HepG2 (cell line): ENCODE measurements at regions of chr16 and their contacts with region 1.

Region 1: GRCh38 chr16:8797364-8798173 is at the starts of genes PMM2 and TMEM186:
- DNase-seq: peak; percentile 99
- ATAC-seq: peak; percentile 98
- H3K4me3 ChIP-seq: peak within 1 kb of the TSS; percentile 85 to 87 (median 86)
- H3K27ac ChIP-seq: peak within 1 kb of the TSS; percentile 70
- H3K4me1 ChIP-seq: peaks cover 45% of the 10 kb centered on the region
- H3K27me3 ChIP-seq: no peaks in the 10 kb centered on the region; a peak in 1 of 5 replicates
- CTCF ChIP-seq: no peak; the same call in none of the 2 replicates
- EP300 ChIP-seq: peak; percentile 59 to 63; a peak in 2 of 4 replicates
- POLR2A ChIP-seq: peak; percentile 93 to 97
- RAD21 ChIP-seq: peak; percentile 80
- total RNA-seq, gene PMM2: 93.7 and 100 TPM in 2 replicates
- total RNA-seq, gene TMEM186: 19.2 and 19.3 TPM in 2 replicates

Region 2: DNA sequence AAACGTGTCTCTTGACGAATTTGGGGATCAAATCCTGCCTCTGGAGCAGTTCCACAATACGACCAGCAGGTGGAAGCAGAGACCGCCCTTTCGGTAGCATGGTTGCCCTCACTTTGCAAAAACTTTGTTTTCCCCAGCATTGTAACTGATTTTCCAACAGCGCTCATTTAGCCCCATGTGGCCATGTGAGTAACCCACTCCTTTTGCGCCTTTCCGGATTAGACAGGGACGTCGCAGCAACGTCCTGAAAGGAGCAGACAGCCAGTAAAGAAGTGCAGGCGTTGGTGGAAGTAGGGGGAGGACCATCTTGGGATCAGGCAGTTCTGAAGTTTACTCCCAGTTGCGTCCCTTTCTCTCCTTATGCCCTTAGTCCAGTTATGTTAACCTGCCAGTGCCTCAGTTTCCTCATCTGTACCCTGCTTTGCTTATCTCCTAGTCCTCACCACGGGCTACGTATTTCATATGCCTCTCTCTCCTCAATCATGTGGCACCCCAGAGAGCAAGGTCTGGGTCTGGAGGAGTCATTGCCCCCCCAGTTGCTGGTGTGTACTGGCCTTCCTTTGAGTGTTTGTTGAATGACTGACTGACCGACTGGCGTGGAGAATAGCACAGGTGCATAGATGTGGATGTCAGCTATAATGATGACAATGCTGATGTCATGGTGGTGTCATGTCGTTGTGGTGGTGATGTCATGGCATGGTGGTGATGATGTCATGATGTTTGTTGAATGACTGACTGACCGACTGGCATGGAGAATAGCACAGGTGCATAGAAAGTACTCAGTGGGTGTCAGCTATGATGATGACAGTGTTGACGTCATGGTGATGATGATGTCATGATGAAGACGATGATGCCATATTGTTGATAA is 229.6 kb before region 1 on chr16:
- CTCF ChIA-PET with region 1: interaction called, 16 read pairs
- POLR2A ChIA-PET with region 1: no interaction called
- in situ Hi-C with region 1: loop called (anchors 5 kb)
- intact Hi-C with region 1: loop called (anchors 1 kb)
- DNase-seq: peak; percentile 97
- ATAC-seq: peak; percentile 68
- H3K4me3 ChIP-seq: no peak overlapping the region
- H3K27ac ChIP-seq: no peak overlapping the region
- H3K4me1 ChIP-seq: peaks cover 53% of the 10 kb centered on the region
- H3K27me3 ChIP-seq: 0 out of 5 replicates have a peak, but pooled peaks cover 0 to 3% of the 10 kb centered on the region in 2 experiments
- CTCF ChIP-seq: peak; percentile 100
- EP300 ChIP-seq: 0 out of 4 replicates have a peak, but pooled peaks of 1 of the 2 experiments have one; percentile 25
- POLR2A ChIP-seq: no peak
- RAD21 ChIP-seq: peak; percentile 100

Region 3: DNA sequence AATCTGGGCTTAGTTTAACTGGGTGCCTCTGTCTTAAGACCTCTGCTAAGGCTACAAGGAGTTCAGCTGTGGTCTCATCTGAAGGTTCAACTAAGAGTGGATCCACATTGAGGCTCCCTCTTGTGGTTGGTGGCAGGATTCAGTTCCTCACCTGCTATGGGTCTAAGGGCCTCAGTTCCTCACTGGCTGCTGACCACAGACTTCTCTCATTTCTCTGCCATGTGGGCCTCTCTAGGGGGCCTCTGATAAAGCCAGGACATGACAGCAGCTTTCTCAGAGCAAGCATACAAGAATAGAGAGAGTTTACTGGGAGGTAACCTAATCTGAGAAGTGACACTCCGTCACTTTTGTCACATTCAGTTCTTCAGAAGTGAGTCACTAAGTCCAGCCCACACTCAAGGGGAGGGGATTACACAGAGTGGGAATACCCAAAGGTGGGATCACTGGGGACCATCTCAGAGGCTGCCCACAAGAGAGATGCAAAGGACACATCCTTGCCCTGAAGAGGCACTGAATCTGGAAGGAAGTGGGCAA is 142.3 kb before region 1 on chr16:
- CTCF ChIA-PET with region 1: interaction called, 99 read pairs
- POLR2A ChIA-PET with region 1: interaction called, 3 read pairs
- in situ Hi-C with region 1: loop called (anchors 5 kb)
- intact Hi-C with region 1: no loop called
- DNase-seq: peak; percentile 73
- ATAC-seq: peak; percentile 85
- H3K4me3 ChIP-seq: no peak overlapping the region
- H3K27ac ChIP-seq: no peak overlapping the region
- H3K4me1 ChIP-seq: peaks cover 5% of the 10 kb centered on the region
- H3K27me3 ChIP-seq: peaks cover 0 to 2% of the 10 kb centered on the region in 2 experiments; a peak in 2 of 5 replicates
- CTCF ChIP-seq: peak; percentile 92
- EP300 ChIP-seq: no peak
- POLR2A ChIP-seq: no peak
- RAD21 ChIP-seq: peak; percentile 76

Region 4: GRCh38 chr16:8660841-8661301 is 136.7 kb before region 1 on chr16:
- CTCF ChIA-PET with region 1: interaction called, 99 read pairs
- POLR2A ChIA-PET with region 1: interaction called, 3 read pairs
- in situ Hi-C with region 1: loop called (anchors 5 kb)
- intact Hi-C with region 1: loop called (anchors 1 kb)
- DNase-seq: peak; percentile 71
- ATAC-seq: peak; percentile 88
- H3K4me3 ChIP-seq: peak overlapping the region in 1 of 3 experiments; percentile 17; a peak in 1 of 6 replicates
- H3K27ac ChIP-seq: no peak overlapping the region
- H3K4me1 ChIP-seq: no peaks in the 10 kb centered on the region
- H3K27me3 ChIP-seq: peaks cover 0 to 2% of the 10 kb centered on the region in 2 experiments; a peak in 2 of 5 replicates
- CTCF ChIP-seq: peak; percentile 99
- EP300 ChIP-seq: no peak
- POLR2A ChIP-seq: no peak
- RAD21 ChIP-seq: peak; percentile 99

Region 5: DNA sequence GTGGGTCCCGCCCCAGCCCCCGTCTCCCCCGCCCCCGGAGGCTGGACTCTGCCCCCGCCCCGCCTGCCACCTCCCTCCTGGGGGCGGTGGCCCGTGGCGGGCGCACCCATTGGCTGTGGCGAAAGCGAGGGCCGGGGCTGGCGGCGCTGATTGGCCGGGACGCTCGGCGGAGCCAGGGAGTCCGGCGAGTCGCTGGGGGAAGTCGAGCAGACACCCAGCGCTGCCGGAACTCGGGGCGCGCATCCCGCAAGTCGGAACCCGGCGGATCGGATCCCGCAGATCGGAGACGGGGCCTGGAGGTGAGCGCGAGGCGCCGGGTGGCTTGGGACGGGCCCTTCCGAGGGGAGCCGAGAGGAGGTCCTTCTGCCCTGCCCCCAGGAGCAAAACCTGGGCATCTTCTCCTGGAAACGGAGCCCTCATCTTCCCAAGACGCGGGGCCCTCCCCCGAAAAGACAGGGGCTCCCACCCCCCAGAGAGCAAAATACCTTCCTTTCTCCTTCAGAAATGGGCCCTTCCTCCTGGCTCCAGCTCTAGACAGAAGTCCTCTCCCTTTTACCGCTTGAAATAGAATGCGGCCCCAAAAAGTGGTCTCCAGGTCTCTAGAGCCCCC is 123.1 kb before region 1 on chr16 and contains the start of gene ABAT:
- CTCF ChIA-PET with region 1: no interaction called
- POLR2A ChIA-PET with region 1: no interaction called
- in situ Hi-C with region 1: no loop called
- intact Hi-C with region 1: loop called (anchors 2 kb)
- DNase-seq: peak; percentile 91
- ATAC-seq: peak; percentile 93
- H3K4me3 ChIP-seq: peak within 1 kb of the TSS; percentile 81 to 94 (median 89)
- H3K27ac ChIP-seq: peak within 1 kb of the TSS; percentile 39
- H3K4me1 ChIP-seq: peaks cover 59% of the 10 kb centered on the region
- H3K27me3 ChIP-seq: no peaks in the 10 kb centered on the region; a peak in 1 of 5 replicates
- CTCF ChIP-seq: 0 out of 2 replicates have a peak, but pooled peaks have one; percentile 9
- EP300 ChIP-seq: peak; percentile 60 to 64; a peak in 2 of 4 replicates
- POLR2A ChIP-seq: peak; percentile 86 to 88
- RAD21 ChIP-seq: peak; percentile 58; the same call in 1 of the 2 replicates
- total RNA-seq, gene ABAT: 97.3 and 123 TPM in 2 replicates

Region 6: GRCh38 chr16:8740775-8741355 is 56.7 kb before region 1 on chr16:
- CTCF ChIA-PET with region 1: no interaction called
- POLR2A ChIA-PET with region 1: interaction called, 4 read pairs
- in situ Hi-C with region 1: no loop called
- intact Hi-C with region 1: loop called (anchors 2 kb)
- DNase-seq: peak; percentile 100
- ATAC-seq: peak; percentile 99
- H3K4me3 ChIP-seq: peak overlapping the region in 1 of 3 experiments; percentile 0; a peak in 1 of 6 replicates
- H3K27ac ChIP-seq: peak overlapping the region; percentile 48
- H3K4me1 ChIP-seq: peaks cover 34% of the 10 kb centered on the region
- H3K27me3 ChIP-seq: no peaks in the 10 kb centered on the region
- CTCF ChIP-seq: no peak
- EP300 ChIP-seq: peak in 1 of 2 experiments; percentile 86; a peak in 2 of 4 replicates
- POLR2A ChIP-seq: peak in 1 of 2 experiments; percentile 35; a peak in 1 of 4 replicates
- RAD21 ChIP-seq: peak; percentile 64

Region 7: DNA sequence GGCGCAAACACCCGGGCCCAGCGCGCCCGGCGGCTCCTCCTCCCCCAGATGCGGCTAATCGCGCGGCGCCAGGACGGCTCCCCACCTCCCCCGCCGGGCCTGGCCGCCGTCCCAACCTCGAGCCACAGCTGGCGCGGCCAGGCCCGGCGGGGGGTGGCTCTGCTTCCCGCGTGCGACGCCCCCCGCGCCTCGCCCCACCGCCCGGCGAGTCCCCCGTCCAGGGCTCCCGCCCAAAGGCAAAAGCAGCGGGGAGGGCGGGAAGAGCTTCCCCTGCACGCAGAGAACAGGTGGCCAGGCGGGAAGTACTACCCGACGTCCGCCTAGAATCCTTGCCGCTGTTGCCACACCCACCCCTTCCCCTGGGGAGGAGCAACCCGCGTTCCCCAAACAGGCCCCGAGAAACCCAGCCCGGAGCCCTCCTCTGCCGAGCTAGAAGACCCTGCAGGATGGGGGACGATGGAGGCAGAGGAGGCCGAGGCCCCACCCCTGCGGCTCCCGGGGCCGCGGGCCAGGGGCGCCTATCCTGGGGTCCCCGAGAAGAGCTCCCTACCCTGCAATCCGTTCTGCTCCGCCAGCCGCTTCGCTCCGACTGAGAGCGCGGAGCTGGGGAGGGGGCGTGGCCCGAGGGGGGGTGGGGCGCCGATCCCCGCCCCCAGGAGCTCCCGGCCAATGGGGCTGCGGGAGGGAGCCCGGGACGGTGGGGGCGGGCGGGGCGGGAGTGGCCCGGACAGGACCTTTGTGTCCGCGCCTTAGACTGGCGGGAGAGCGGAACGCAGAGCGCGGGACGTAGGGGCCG is 71.0 kb after region 1 on chr16 and contains the start of gene CARHSP1:
- CTCF ChIA-PET with region 1: no interaction called
- POLR2A ChIA-PET with region 1: interaction called, 19 read pairs
- in situ Hi-C with region 1: no loop called
- intact Hi-C with region 1: loop called (anchors 2 kb)
- DNase-seq: peak; percentile 93
- ATAC-seq: peak; percentile 63
- H3K4me3 ChIP-seq: peak within 1 kb of the TSS; percentile 82 to 97 (median 87)
- H3K27ac ChIP-seq: peak within 1 kb of the TSS; percentile 95
- H3K4me1 ChIP-seq: peaks cover 76% of the 10 kb centered on the region
- H3K27me3 ChIP-seq: no peaks in the 10 kb centered on the region; a peak in 1 of 5 replicates
- CTCF ChIP-seq: no peak
- EP300 ChIP-seq: peak in 1 of 2 experiments; percentile 4; a peak in 1 of 4 replicates
- POLR2A ChIP-seq: peak in 1 of 2 experiments; percentile 88; a peak in 2 of 4 replicates
- RAD21 ChIP-seq: 0 out of 2 replicates have a peak, but pooled peaks have one; percentile 38
- total RNA-seq, gene CARHSP1: 345 and 349 TPM in 2 replicates

Region 8: GRCh38 chr16:8936421-8936820 is 138.9 kb after region 1 on chr16:
- CTCF ChIA-PET with region 1: no interaction called
- POLR2A ChIA-PET with region 1: no interaction called
- in situ Hi-C with region 1: no loop called
- intact Hi-C with region 1: no loop called
- DNase-seq: peak; percentile 70
- ATAC-seq: peak; percentile 94
- H3K4me3 ChIP-seq: no peak overlapping the region
- H3K27ac ChIP-seq: no peak overlapping the region
- H3K4me1 ChIP-seq: peaks cover 64% of the 10 kb centered on the region
- H3K27me3 ChIP-seq: no peaks in the 10 kb centered on the region
- CTCF ChIP-seq: peak; percentile 79
- EP300 ChIP-seq: no peak
- POLR2A ChIP-seq: no peak
- RAD21 ChIP-seq: peak; percentile 45